ENCODE measurements at regions of chr18 and their contacts with region 1.

Region 1: GRCh38 chr18:24726727-24727492 is 266.5 kb downstream of the HRH4 start:
- DNase-seq: peak in 4 of 5 donors; percentile 71 to 93 (median 86)
- H3K4me3 ChIP-seq: peak overlapping the region; percentile 22 to 49 (median 43)
- H3K27ac ChIP-seq: no peak overlapping the region
- H3K4me1 ChIP-seq: no peaks in the 10 kb centered on the region
- H3K27me3 ChIP-seq: no peaks in the 10 kb centered on the region
- CTCF ChIP-seq: peak; percentile 81

Region 2: GRCh38 chr18:24595561-24596031 is 131.3 kb before region 1 on chr18:
- intact Hi-C with region 1: loop called (anchors 5 kb)
- DNase-seq: peak in 4 of 5 donors; percentile 42 to 67 (median 58)
- H3K4me3 ChIP-seq: no peak overlapping the region
- H3K27ac ChIP-seq: no peak overlapping the region
- H3K4me1 ChIP-seq: peaks cover 0 to 2% (median 0%) of the 10 kb centered on the region in 3 donors
- H3K27me3 ChIP-seq: no peaks in the 10 kb centered on the region
- CTCF ChIP-seq: no peak